ENCODE measurements at regions of chr6 and their contacts with region 1.

Region 1: GRCh38 chr6:43334466-43335095 is 26.0 kb upstream of the CRIP3 start:
- DNase-seq: peak in 2 of 7 donors; percentile 11 to 12
- H3K4me3 ChIP-seq: no peak overlapping the region
- H3K27ac ChIP-seq: no peak overlapping the region
- H3K4me1 ChIP-seq: no peaks in the 10 kb centered on the region
- H3K27me3 ChIP-seq: no peaks in the 10 kb centered on the region
- CTCF ChIP-seq: peak; percentile 45 to 68 (median 64)
- POLR2A ChIP-seq: no peak

Region 2: GRCh38 chr6:43263314-43264178 is 71.0 kb before region 1 on chr6:
- intact Hi-C with region 1: loop called (anchors 2 to 5 kb)
- DNase-seq: peak; percentile 78 to 91 (median 88)
- H3K4me3 ChIP-seq: no peak overlapping the region
- H3K27ac ChIP-seq: no peak overlapping the region
- H3K4me1 ChIP-seq: peaks cover 6 to 13% of the 10 kb centered on the region in 2 donors
- H3K27me3 ChIP-seq: no peaks in the 10 kb centered on the region
- CTCF ChIP-seq: peak; percentile 58 to 88 (median 80)
- POLR2A ChIP-seq: no peak

Region 3: GRCh38 chr6:43269273-43270007 is 65.1 kb before region 1 on chr6:
- intact Hi-C with region 1: loop called in 1 of 2 experiments (anchors 5 kb)
- DNase-seq: peak in 4 of 7 donors; percentile 40 to 53 (median 42)
- H3K4me3 ChIP-seq: peak overlapping the region in 1 of 4 donors; percentile 37
- H3K27ac ChIP-seq: no peak overlapping the region
- H3K4me1 ChIP-seq: peaks cover 13 to 26% of the 10 kb centered on the region in 2 donors
- H3K27me3 ChIP-seq: no peaks in the 10 kb centered on the region
- CTCF ChIP-seq: no peak
- POLR2A ChIP-seq: no peak

Measured in adrenal gland (tissue), 19 donors.